T-cell (primary cell): ENCODE measurements at regions of chr1 and their contacts with region 1.

Region 1: DNA sequence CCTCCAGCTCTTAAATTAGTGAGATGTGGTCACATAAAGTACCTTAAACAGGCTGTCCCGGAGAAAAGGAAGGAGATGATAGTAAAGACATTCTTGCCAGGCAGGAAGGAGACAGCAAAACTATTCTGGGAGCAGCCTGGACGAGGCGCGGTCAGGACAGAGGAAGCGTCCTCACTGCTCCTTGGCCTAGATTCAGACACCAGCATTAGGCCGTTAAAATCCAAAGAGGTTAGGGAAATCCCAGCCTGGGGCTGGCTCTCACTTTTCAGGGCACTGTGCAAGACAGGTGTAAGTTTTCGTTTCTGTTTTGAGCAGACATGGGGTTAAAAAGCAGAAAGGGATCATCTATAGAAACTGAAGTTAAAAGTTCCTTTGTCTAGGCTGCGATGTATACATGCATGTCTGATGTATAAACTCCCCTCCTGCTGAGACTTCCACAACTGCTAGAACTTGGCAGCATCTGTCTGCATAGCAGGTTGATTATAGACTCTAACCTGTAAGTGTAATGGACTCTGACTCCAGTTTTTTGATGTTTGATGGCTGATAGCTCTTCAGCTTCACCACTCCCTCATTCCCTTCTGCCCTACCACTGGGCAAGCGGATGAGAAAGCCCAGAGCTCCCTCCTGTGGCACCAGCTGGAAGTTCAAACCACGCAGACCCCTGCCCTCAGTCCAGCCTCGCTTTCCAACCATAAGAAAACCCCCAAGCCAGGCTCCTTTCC is 21.5 kb downstream of the STPG1 start:
- DNase-seq: peak in 30 of 35 experiments; percentile 12 to 77 (median 48)
- ATAC-seq: peak; percentile 67 to 75 (median 72)
- H3K4me3 ChIP-seq: peak overlapping the region in 1 of 2 donors; percentile 20
- H3K4me3 Mint-ChIP-seq: peak overlapping the region; percentile 68 to 83 (median 77)
- H3K27ac ChIP-seq: peak overlapping the region; percentile 93
- H3K27ac Mint-ChIP-seq: peak overlapping the region; percentile 96 to 98
- H3K4me1 ChIP-seq: peaks cover 11 to 22% of the 10 kb centered on the region in 2 experiments
- H3K4me1 Mint-ChIP-seq: peaks cover 29 to 36% (median 30%) of the 10 kb centered on the region in 3 donors
- H3K27me3 ChIP-seq: no peaks in the 10 kb centered on the region
- H3K27me3 Mint-ChIP-seq: no peaks in the 10 kb centered on the region

Region 2: GRCh38 chr1:24186993-24187805 is 204.8 kb before region 1 on chr1 and contains the start of gene IFNLR1:
- CTCF ChIA-PET with region 1: interaction called in 1 of 2 experiments, 12 read pairs
- POLR2A ChIA-PET with region 1: interaction called in 1 of 2 experiments, 3 read pairs
- DNase-seq: peak; percentile 29 to 86 (median 57)
- ATAC-seq: peak; percentile 73 to 94 (median 77)
- H3K4me3 ChIP-seq: peak within 1 kb of the TSS; percentile 77 to 87
- H3K4me3 Mint-ChIP-seq: peak within 1 kb of the TSS; percentile 79 to 85 (median 84)
- H3K27ac ChIP-seq: peak within 1 kb of the TSS; percentile 56
- H3K27ac Mint-ChIP-seq: peak within 1 kb of the TSS; percentile 68 to 75
- H3K4me1 ChIP-seq: peaks cover 15 to 59% of the 10 kb centered on the region in 2 experiments
- H3K4me1 Mint-ChIP-seq: peaks cover 41 to 57% (median 46%) of the 10 kb centered on the region in 3 donors
- H3K27me3 ChIP-seq: peaks cover 5 to 6% of the 10 kb centered on the region in 2 experiments
- H3K27me3 Mint-ChIP-seq: no peaks in the 10 kb centered on the region
- total RNA-seq, gene IFNLR1: 2.4 to 7.0 (median 6.0) TPM

Region 3: GRCh38 chr1:24216276-24217074 is 175.6 kb before region 1 on chr1:
- CTCF ChIA-PET with region 1: no interaction called
- POLR2A ChIA-PET with region 1: no interaction called
- DNase-seq: no peak
- ATAC-seq: no peak
- H3K4me3 ChIP-seq: no peak overlapping the region
- H3K4me3 Mint-ChIP-seq: no peak overlapping the region
- H3K27ac ChIP-seq: no peak overlapping the region
- H3K27ac Mint-ChIP-seq: no peak overlapping the region
- H3K4me1 ChIP-seq: no peaks in the 10 kb centered on the region
- H3K4me1 Mint-ChIP-seq: no peaks in the 10 kb centered on the region
- H3K27me3 ChIP-seq: peaks cover 0 to 48% of the 10 kb centered on the region in 2 experiments
- H3K27me3 Mint-ChIP-seq: peaks cover 44 to 48% of the 10 kb centered on the region in 2 donors

Region 4: GRCh38 chr1:24351918-24352627 is 40.0 kb before region 1 on chr1:
- CTCF ChIA-PET with region 1: no interaction called
- POLR2A ChIA-PET with region 1: no interaction called
- DNase-seq: peak in 1 of 35 experiments; percentile 6
- ATAC-seq: no peak
- H3K4me3 ChIP-seq: no peak overlapping the region
- H3K4me3 Mint-ChIP-seq: no peak overlapping the region
- H3K27ac ChIP-seq: no peak overlapping the region
- H3K27ac Mint-ChIP-seq: peak overlapping the region in 1 of 2 donors; percentile 67
- H3K4me1 ChIP-seq: peaks cover 0 to 3% of the 10 kb centered on the region in 2 experiments
- H3K4me1 Mint-ChIP-seq: peaks cover 14 to 24% (median 20%) of the 10 kb centered on the region in 3 donors
- H3K27me3 ChIP-seq: peaks cover 0 to 6% of the 10 kb centered on the region in 2 experiments
- H3K27me3 Mint-ChIP-seq: no peaks in the 10 kb centered on the region

Region 5: DNA sequence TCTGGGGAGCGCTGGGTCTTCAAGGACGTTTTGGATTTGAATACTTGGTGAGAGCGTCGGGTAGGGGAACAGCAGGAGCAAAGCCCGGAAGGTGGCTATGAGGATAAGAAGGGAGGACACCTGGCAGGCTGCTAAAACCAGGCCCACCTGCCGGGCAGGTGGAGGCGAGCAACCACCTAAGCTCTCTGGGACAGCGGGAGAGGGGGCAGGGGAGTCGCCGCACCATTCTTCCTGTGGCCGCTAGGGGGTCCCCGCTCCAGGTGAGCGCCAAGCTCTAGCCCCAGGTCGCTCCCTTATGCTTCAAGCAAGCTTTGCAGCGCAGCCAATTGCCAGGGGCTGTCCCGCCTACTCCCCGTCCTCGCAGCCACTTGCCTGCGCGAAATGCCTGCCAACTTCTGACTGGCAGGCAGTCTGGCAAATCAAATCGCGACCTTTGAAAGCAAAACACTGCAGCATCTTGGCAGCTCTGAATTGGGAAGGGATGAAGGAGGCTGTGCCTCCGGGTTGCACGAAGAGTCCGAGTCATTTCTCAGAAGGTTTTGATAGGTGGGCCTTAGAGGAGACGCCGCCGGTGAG is 23.4 kb after region 1 on chr1 and contains the start of gene NIPAL3:
- CTCF ChIA-PET with region 1: interaction called in 1 of 2 experiments, 50 read pairs
- POLR2A ChIA-PET with region 1: interaction called in 1 of 2 experiments, 4 read pairs
- DNase-seq: peak; percentile 93 to 100 (median 98)
- ATAC-seq: peak; percentile 94 to 98 (median 96)
- H3K4me3 ChIP-seq: peak within 1 kb of the TSS; percentile 85 to 93
- H3K4me3 Mint-ChIP-seq: peak within 1 kb of the TSS; percentile 92 to 99 (median 93)
- H3K27ac ChIP-seq: peak within 1 kb of the TSS; percentile 56
- H3K27ac Mint-ChIP-seq: peak within 1 kb of the TSS; percentile 91 to 93
- H3K4me1 ChIP-seq: peaks cover 31 to 54% of the 10 kb centered on the region in 2 experiments
- H3K4me1 Mint-ChIP-seq: peaks cover 66 to 75% (median 72%) of the 10 kb centered on the region in 3 donors
- H3K27me3 ChIP-seq: no peaks in the 10 kb centered on the region
- H3K27me3 Mint-ChIP-seq: no peaks in the 10 kb centered on the region
- total RNA-seq, gene NIPAL3: 49.0 to 71.4 (median 59.7) TPM

Region 6: DNA sequence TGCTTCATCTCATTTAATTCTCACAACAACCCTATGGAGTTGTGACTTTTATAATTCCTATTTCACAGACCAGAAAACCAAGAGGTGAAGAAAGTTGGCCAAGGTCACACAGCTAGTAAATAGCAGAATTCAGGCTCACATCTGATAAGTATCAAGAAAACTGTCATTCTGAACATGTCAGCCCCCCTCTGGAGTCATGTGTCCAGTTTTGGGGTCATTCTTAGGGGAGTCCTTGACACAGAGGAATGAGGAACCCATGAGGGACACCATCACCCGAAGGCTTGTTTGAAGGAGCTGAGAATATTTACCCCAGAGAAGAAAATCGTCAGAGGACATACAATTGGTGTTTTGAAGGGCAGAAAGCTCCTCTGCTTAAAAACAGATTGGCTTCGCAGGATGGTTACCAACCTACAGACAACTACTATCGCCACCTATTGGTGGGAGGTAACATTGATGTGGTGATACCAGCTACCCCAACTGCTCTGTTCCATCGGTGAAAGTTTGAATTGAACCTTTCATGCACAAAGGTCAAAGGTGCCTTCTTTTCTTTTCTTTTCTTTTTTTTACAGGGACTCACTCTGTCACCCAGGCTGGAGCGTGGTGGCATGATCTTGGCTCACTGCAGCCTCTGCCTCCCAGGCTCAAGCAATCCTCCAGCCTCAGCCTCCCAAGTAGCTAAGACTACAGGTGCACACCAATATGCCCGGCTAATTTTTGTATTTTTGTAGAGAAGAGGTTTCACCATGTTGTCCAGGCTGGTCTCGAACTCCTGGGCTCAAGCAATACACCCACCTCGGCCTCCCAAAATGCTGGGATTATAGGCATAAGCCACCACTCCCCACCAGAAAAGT is 195.2 kb after region 1 on chr1:
- CTCF ChIA-PET with region 1: interaction called, 7 to 30 read pairs
- POLR2A ChIA-PET with region 1: no interaction called
- DNase-seq: peak in 33 of 35 experiments; percentile 12 to 88 (median 50)
- ATAC-seq: peak; percentile 96 to 99 (median 98)
- H3K4me3 ChIP-seq: no peak overlapping the region
- H3K4me3 Mint-ChIP-seq: no peak overlapping the region
- H3K27ac ChIP-seq: peak overlapping the region; percentile 43
- H3K27ac Mint-ChIP-seq: peak overlapping the region; percentile 79 to 86
- H3K4me1 ChIP-seq: no peaks in the 10 kb centered on the region
- H3K4me1 Mint-ChIP-seq: peaks cover 6 to 9% (median 8%) of the 10 kb centered on the region in 3 donors
- H3K27me3 ChIP-seq: peaks cover 0 to 17% of the 10 kb centered on the region in 2 experiments
- H3K27me3 Mint-ChIP-seq: peaks cover 0 to 7% of the 10 kb centered on the region in 2 donors